ENCODE measurements at regions of chr20 and their contacts with region 1.

Region 1: DNA sequence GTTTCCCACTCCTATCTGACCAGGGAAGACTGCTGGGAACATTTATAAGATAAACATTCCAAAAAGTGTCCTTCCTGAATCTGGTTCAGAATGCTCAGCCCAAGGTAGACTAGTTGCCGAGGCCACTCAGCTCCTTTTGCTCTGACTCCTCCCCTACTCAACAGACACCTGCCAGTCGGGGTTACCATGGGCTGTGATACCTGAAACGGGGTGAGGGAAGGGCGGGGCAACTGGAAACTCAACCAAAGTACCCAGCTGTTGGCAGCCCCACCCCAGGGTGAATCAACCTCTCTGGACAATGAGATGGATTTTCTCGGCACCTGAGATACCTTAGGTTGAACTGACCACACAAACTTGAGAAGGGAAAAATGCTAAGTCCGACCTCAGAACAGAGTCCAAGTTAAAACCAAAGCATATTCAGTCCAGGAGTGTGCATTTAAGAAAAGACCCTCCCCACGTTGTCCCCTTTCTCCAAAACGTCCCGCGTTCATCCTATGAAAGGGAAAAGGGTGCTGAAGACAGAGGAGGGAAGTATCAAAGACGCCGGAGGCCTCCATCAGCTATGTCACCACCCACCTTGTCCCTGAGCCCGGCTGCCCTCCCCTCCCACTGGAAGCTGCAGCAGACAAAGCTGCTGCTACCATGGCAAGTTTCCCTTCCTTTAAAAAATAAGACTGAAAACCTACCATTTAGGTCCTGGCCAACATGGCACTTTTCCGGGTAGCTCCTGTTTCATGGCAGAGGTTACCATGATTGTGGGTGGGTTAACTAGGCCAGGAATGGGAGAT is 100.1 kb downstream of the SLC23A2 start:
- DNase-seq: no peak
- H3K4me3 ChIP-seq: no peak overlapping the region
- H3K4me3 Mint-ChIP-seq: no peak overlapping the region
- H3K27ac Mint-ChIP-seq: no peak overlapping the region
- H3K4me1 ChIP-seq: peaks cover 17% of the 10 kb centered on the region
- H3K4me1 Mint-ChIP-seq: peaks cover 7% of the 10 kb centered on the region
- H3K27me3 ChIP-seq: no peaks in the 10 kb centered on the region
- H3K27me3 Mint-ChIP-seq: no peaks in the 10 kb centered on the region
- CTCF ChIP-seq: no peak

Region 2: DNA sequence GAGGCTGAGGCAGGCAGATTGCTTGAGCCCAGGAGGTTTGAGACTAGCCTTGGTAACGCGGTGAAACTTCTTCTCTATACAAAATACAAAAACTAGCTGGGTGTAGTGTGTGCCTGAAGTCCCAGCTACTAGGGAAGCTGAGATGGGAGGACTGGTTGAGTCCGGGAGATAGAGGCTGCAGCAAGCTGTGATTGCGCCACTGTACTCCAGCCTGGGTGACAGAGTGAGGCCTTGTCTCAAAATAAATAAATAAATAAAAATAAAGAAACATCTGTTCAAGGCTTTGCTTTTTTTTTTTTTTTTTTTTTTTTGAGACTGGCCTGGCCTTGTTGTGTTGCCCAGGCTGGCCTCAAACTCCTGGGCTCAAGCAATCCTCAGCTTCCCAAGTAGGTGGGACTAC is 123.8 kb after region 1 on chr20:
- CTCF ChIA-PET with region 1: no interaction called
- POLR2A ChIA-PET with region 1: no interaction called
- intact Hi-C with region 1: loop called (anchors 5 kb)
- DNase-seq: no peak
- H3K4me3 ChIP-seq: no peak overlapping the region
- H3K4me3 Mint-ChIP-seq: no peak overlapping the region
- H3K27ac Mint-ChIP-seq: no peak overlapping the region
- H3K4me1 ChIP-seq: peaks cover 13% of the 10 kb centered on the region
- H3K4me1 Mint-ChIP-seq: peaks cover 14% of the 10 kb centered on the region
- H3K27me3 ChIP-seq: no peaks in the 10 kb centered on the region
- H3K27me3 Mint-ChIP-seq: no peaks in the 10 kb centered on the region
- CTCF ChIP-seq: no peak